ENCODE measurements at regions of chr20 and their contacts with region 1.

Region 1: DNA sequence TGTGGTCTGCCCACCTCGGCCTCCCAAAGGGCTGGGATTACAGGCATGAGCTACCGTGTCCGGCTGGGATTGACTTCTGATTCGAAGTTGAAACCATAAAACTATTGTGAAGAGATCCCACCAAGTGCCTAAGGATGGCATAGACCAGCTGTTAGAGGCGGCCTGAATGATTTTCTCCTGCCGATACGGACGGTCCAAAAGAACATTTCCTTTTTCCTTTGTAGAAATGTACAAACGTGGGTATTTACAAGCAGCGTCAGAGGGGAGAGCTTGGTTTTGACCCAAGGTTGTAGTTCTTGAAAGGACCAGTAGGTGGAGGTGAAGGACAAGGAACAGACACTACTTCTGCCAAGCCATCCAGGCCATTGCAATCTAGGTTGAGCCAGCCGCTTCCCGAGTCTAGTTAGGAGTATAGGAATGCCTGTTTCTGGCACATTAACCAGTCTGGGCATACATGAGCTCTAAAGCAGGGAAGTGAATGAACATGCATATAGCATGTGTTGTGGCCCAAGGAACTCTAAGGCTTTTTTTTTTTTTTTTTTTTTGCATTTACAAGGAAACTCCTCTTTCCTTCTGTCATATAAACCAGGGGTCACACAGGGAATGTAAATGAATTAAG is 29.1 kb downstream of the MOCS3 start:
- DNase-seq: peak; percentile 80
- H3K4me3 ChIP-seq: no peak overlapping the region
- H3K27ac ChIP-seq: no peak overlapping the region
- H3K4me1 ChIP-seq: peaks cover 23% of the 10 kb centered on the region
- H3K27me3 ChIP-seq: no peaks in the 10 kb centered on the region
- CTCF ChIP-seq: peak; percentile 72 to 86

Region 2: GRCh38 chr20:51220293-51220706 is 232.6 kb after region 1 on chr20:
- CTCF ChIA-PET with region 1: no interaction called
- dilution Hi-C with region 1: no loop called
- in situ Hi-C with region 1: no loop called
- intact Hi-C with region 1: loop called (anchors 1 kb)
- DNase-seq: no peak
- H3K4me3 ChIP-seq: no peak overlapping the region
- H3K27ac ChIP-seq: no peak overlapping the region
- H3K4me1 ChIP-seq: no peaks in the 10 kb centered on the region
- H3K27me3 ChIP-seq: no peaks in the 10 kb centered on the region
- CTCF ChIP-seq: peak; percentile 87 to 95

Region 3: GRCh38 chr20:51366155-51366886 is 378.6 kb after region 1 on chr20:
- CTCF ChIA-PET with region 1: no interaction called
- dilution Hi-C with region 1: no loop called
- in situ Hi-C with region 1: loop called in 1 of 2 experiments (anchors 10 kb)
- intact Hi-C with region 1: loop called (anchors 5 kb)
- DNase-seq: peak; percentile 98
- H3K4me3 ChIP-seq: no peak overlapping the region
- H3K27ac ChIP-seq: peak overlapping the region; percentile 87
- H3K4me1 ChIP-seq: peaks cover 20% of the 10 kb centered on the region
- H3K27me3 ChIP-seq: no peaks in the 10 kb centered on the region
- CTCF ChIP-seq: no peak

Region 4: DNA sequence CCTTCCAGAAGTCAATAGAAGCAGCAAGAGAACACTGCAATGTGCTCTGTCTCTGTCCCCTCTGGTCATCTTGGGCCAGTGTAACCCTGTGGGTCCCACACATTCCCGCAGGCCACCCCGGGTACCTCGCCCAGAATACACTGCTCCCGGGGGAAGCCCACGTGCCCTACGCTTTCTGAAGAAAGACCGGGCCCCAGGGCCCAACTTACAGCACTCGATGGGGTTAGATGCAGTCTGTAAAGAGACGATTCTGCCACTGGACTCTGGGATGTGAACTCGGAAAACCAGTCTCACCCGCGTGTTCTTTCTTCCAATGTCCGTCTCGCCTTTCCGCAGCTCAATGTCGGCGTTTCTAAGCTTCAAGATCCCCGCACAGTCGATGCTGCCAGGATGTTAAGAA is 486.1 kb after region 1 on chr20:
- CTCF ChIA-PET with region 1: interaction called, 10 read pairs
- dilution Hi-C with region 1: no loop called
- in situ Hi-C with region 1: no loop called
- intact Hi-C with region 1: no loop called
- DNase-seq: no peak
- H3K4me3 ChIP-seq: no peak overlapping the region
- H3K27ac ChIP-seq: no peak overlapping the region
- H3K4me1 ChIP-seq: no peaks in the 10 kb centered on the region
- H3K27me3 ChIP-seq: no peaks in the 10 kb centered on the region
- CTCF ChIP-seq: no peak

Region 5: GRCh38 chr20:51507216-51508036 is 519.7 kb after region 1 on chr20:
- CTCF ChIA-PET with region 1: no interaction called
- dilution Hi-C with region 1: no loop called
- in situ Hi-C with region 1: no loop called
- intact Hi-C with region 1: no loop called
- DNase-seq: no peak
- H3K4me3 ChIP-seq: no peak overlapping the region
- H3K27ac ChIP-seq: no peak overlapping the region
- H3K4me1 ChIP-seq: peaks cover 5% of the 10 kb centered on the region
- H3K27me3 ChIP-seq: no peaks in the 10 kb centered on the region
- CTCF ChIP-seq: no peak

Region 6: GRCh38 chr20:51624157-51624731 is 636.5 kb after region 1 on chr20:
- CTCF ChIA-PET with region 1: no interaction called
- dilution Hi-C with region 1: no loop called
- in situ Hi-C with region 1: loop called in 1 of 2 experiments (anchors 10 kb)
- intact Hi-C with region 1: no loop called
- DNase-seq: peak; percentile 42
- H3K4me3 ChIP-seq: no peak overlapping the region
- H3K27ac ChIP-seq: no peak overlapping the region
- H3K4me1 ChIP-seq: no peaks in the 10 kb centered on the region
- H3K27me3 ChIP-seq: peaks cover 2% of the 10 kb centered on the region
- CTCF ChIP-seq: peak; percentile 50 to 70

Region 7: DNA sequence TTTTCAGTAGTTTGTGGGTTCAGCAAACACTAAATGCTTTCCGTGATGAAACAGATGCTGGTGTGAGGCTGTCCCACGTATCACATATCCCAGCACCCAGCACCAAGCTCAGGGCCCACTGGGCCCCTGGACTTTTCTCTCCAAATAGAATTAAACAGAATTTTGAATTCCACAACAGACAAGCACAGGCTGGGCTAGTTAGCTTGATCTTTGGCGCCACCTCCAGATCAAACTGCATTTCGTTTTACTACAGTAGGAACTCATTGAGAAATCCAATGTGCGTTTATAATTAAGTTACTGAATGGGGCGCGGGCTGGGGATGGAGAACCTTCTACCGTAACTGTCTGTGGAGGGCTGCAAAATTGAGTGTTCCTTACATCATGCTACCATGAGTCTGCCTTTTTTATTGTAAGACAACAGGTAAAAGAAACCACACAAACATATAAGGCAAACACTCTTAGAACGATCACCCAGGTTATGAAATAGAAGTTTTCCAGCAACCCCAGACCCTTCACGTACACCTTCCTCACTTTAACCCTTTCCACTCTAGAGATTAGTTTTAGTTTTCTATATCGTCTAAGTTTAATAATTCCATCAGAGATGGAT is 1096.0 kb after region 1 on chr20:
- CTCF ChIA-PET with region 1: no interaction called
- dilution Hi-C with region 1: no loop called
- in situ Hi-C with region 1: no loop called
- intact Hi-C with region 1: loop called (anchors 5 kb)
- DNase-seq: peak; percentile 25
- H3K4me3 ChIP-seq: no peak overlapping the region
- H3K27ac ChIP-seq: no peak overlapping the region
- H3K4me1 ChIP-seq: no peaks in the 10 kb centered on the region
- H3K27me3 ChIP-seq: no peaks in the 10 kb centered on the region
- CTCF ChIP-seq: peak; percentile 55 to 77

Measured in mammary epithelial cell (primary cell).